Caco-2 (cell line): ENCODE measurements at regions of chr10 and their contacts with region 1.

Region 1: DNA sequence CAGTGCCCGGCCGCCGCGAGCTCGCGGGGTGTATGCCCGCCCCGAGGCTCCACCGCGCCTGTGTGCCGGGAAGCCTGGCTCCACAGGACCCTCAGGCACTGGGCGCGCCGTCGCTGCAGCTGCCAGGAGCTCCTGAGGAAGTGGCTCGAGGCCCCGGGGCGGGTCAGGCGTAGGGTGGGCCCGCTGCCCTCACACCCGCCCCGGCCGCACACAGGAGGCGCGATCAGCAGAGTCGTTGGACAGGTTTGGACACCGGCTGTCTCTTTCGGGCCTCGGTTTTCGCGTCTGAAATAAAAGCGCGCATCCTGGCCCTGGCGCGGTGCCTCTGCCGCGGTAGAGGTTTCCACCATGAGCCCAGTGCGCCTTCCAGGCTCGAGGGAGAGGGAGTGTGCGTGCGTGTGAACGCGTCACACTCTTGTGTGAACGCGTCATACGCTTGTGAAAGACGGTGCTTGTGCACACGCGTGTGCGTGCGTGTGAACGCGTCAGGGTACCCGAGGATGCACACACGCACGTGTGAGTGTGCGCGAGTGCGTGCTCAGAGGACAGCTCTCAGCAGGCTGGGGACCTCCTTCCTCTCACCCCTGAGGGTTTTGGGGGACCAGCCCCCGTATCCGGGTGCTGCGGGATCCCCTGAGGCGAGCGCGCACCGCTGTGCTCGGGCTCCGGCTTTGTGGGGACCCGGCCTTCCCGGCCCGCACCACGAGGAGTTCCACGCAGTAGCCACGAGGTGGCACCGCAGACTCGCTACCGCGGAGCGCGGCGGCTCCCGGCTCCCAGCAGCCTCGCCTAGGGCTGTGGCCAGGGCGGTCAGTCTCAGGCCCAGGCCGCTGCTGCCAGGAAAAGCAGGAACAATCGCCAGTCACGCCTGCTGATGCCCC is 83.8 kb downstream of the BMS1 start:
- DNase-seq: peak; percentile 73 to 85
- H3K4me3 ChIP-seq: peak overlapping the region; percentile 16
- H3K4me3 Mint-ChIP-seq: peak overlapping the region; percentile 37
- H3K27ac Mint-ChIP-seq: no peak overlapping the region
- H3K4me1 ChIP-seq: no peaks in the 10 kb centered on the region
- H3K4me1 Mint-ChIP-seq: peaks cover 4% of the 10 kb centered on the region
- H3K27me3 ChIP-seq: 0 out of 2 replicates have a peak, but pooled peaks cover 2% of the 10 kb centered on the region
- H3K27me3 Mint-ChIP-seq: peaks cover 29% of the 10 kb centered on the region
- CTCF ChIP-seq: peak; percentile 73 to 79

Region 2: GRCh38 chr10:42583828-42584227 is 282.5 kb before region 1 on chr10:
- CTCF ChIA-PET with region 1: no interaction called
- POLR2A ChIA-PET with region 1: no interaction called
- intact Hi-C with region 1: no loop called
- DNase-seq: no peak
- H3K4me3 ChIP-seq: no peak overlapping the region
- H3K4me3 Mint-ChIP-seq: no peak overlapping the region
- H3K27ac Mint-ChIP-seq: no peak overlapping the region
- H3K4me1 ChIP-seq: no peaks in the 10 kb centered on the region
- H3K4me1 Mint-ChIP-seq: no peaks in the 10 kb centered on the region
- H3K27me3 ChIP-seq: no peaks in the 10 kb centered on the region
- H3K27me3 Mint-ChIP-seq: no peaks in the 10 kb centered on the region
- CTCF ChIP-seq: no peak

Region 3: GRCh38 chr10:42975558-42976340 is 109.4 kb after region 1 on chr10:
- CTCF ChIA-PET with region 1: no interaction called
- POLR2A ChIA-PET with region 1: no interaction called
- intact Hi-C with region 1: loop called (anchors 1 kb)
- DNase-seq: peak; percentile 50 to 60
- H3K4me3 ChIP-seq: no peak overlapping the region
- H3K4me3 Mint-ChIP-seq: no peak overlapping the region
- H3K27ac Mint-ChIP-seq: no peak overlapping the region
- H3K4me1 ChIP-seq: no peaks in the 10 kb centered on the region
- H3K4me1 Mint-ChIP-seq: no peaks in the 10 kb centered on the region
- H3K27me3 ChIP-seq: no peaks in the 10 kb centered on the region; the same call in 1 of the 2 replicates
- H3K27me3 Mint-ChIP-seq: peaks cover 3% of the 10 kb centered on the region
- CTCF ChIP-seq: peak; percentile 20 to 61

Region 4: DNA sequence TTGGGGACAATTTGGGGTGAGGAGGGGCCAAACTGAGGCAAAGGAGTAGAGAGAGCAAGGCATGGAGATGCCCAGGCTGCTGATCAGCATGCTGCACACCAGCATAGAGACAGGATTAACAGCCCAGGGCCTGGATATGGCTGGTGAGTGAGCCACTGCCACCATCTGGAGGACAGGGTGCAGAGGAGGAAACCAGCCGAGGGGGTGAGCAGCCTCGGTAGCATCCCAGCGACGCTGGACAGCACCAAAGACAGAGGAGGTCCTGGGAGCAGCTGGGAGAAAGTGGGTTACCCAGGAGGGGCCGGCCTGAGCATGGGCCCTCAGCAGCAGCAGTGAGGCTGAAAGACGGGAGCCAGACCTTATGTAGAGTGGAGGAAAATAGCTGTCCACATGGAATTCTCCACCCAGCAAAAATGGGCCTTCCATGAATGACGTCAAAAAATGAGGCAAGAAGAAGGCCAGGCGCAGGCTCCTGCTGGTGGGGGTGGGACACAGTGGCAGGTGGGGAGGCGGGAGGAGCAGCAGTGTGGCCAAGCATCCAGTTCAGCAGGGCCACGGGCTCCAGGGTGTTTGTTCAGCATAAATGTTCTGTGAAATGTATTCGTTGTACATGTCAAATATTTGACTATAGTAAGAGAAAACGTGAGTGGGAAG is 227.2 kb after region 1 on chr10:
- CTCF ChIA-PET with region 1: no interaction called
- POLR2A ChIA-PET with region 1: no interaction called
- intact Hi-C with region 1: loop called (anchors 1 kb)
- DNase-seq: peak in 1 of 2 experiments; percentile 47
- H3K4me3 ChIP-seq: no peak overlapping the region
- H3K4me3 Mint-ChIP-seq: no peak overlapping the region
- H3K27ac Mint-ChIP-seq: no peak overlapping the region
- H3K4me1 ChIP-seq: no peaks in the 10 kb centered on the region
- H3K4me1 Mint-ChIP-seq: no peaks in the 10 kb centered on the region
- H3K27me3 ChIP-seq: peaks cover 6% of the 10 kb centered on the region
- H3K27me3 Mint-ChIP-seq: peaks cover 27% of the 10 kb centered on the region
- CTCF ChIP-seq: peak; percentile 14 to 57

Region 5: GRCh38 chr10:43105102-43105785 is 238.9 kb after region 1 on chr10:
- CTCF ChIA-PET with region 1: no interaction called
- POLR2A ChIA-PET with region 1: no interaction called
- intact Hi-C with region 1: loop called (anchors 1 kb)
- DNase-seq: peak; percentile 80 to 91
- H3K4me3 ChIP-seq: peak overlapping the region; percentile 48
- H3K4me3 Mint-ChIP-seq: peak overlapping the region; percentile 68
- H3K27ac Mint-ChIP-seq: no peak overlapping the region
- H3K4me1 ChIP-seq: no peaks in the 10 kb centered on the region
- H3K4me1 Mint-ChIP-seq: no peaks in the 10 kb centered on the region
- H3K27me3 ChIP-seq: peaks cover 3% of the 10 kb centered on the region
- H3K27me3 Mint-ChIP-seq: peaks cover 18% of the 10 kb centered on the region
- CTCF ChIP-seq: peak; percentile 99